ENCODE measurements at regions of chr7 and their contacts with region 1.

Region 1: DNA sequence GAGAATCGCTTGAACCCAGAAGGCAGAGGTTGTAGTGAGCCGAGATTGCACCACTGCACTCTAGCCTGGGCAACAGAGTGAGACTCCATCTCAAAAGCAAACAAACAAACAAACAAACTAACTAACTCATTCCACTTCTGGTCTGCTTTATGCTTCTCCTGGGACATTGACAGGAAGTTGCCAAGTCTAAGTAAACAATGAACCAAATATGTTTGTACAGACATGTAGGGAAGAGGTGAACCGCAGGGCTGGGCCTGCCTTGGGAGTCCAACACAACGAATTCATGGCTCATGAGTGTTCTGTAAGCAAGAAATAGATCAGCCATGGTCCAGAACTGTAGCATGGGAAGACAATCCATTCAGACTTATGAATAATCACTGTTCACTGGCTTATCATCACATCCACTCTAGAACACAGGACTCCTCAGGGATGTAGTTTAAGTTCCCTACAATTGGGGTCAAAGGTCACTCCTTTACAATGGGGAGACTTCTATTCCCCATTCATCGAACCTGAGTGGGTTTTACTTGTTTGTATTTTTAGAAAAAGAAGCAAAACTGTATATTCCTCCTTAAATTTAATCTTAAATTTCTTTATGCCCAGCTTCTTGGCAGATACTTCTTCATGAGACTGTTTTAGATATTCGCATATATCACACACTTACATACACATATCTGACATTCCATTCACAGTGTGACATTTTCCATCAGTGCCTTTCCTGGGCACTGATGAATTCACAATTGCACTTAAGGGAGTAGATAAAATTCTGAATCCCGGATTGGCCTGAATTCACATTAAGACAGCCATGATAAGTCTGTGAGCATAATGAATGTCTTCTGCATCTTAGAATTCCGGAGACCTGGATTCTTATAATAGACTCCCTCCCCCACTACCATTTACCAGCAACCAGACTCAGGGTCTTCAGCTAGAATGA is 159.1 kb upstream of the EEPD1 start:
- DNase-seq: peak; percentile 56
- H3K4me3 ChIP-seq: no peak overlapping the region
- H3K27ac ChIP-seq: no peak overlapping the region
- H3K4me1 ChIP-seq: peaks cover 5% of the 10 kb centered on the region
- H3K27me3 ChIP-seq: no peaks in the 10 kb centered on the region
- CTCF ChIP-seq: no peak

Region 2: GRCh38 chr7:36015733-36016132 is 21.8 kb after region 1 on chr7:
- CTCF ChIA-PET with region 1: no interaction called
- dilution Hi-C with region 1: no loop called
- in situ Hi-C with region 1: no loop called
- intact Hi-C with region 1: no loop called
- DNase-seq: peak; percentile 18
- H3K4me3 ChIP-seq: no peak overlapping the region
- H3K27ac ChIP-seq: no peak overlapping the region
- H3K4me1 ChIP-seq: no peaks in the 10 kb centered on the region
- H3K27me3 ChIP-seq: no peaks in the 10 kb centered on the region
- CTCF ChIP-seq: no peak

Region 3: DNA sequence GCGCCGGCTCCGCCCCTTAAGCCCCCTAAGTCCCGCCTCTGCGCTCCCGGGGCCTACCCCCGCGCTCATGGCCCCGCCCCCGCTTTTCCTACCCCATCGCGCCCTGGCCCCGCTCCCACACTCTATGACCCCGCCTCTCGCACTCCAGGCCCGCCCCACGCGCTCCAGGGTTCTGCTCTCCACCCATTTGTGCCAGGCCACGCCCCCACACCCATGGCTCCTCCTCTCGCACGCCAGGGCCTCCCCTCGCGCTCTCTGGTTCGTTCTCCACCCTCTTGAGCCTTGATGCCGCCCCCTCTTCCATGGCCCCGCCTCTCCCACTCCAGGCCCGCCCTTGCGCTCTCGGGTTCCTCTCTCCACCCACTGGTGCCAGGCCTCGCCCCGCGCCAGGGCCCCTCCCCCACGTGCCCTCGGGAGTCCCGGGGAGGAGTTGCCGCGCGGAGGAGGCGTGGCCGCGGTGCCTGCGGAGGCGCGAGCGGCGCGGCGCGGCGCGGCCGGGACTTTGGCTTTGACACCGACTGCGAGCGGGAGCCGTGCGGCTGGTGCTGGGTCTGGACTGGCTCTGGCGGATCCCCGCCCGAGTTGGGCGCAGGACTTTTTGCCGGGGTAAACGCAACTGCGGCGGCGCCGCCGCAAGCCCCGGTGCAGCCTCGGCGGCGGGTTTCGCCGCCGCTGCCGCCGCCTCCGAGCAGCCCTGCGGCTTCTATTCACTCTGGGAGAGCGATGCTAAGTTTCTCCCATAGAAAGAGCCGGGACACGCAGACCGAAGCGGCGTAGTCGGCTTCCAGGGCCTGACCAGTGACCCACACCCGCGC is 159.0 kb after region 1 on chr7 and contains the start of gene EEPD1:
- CTCF ChIA-PET with region 1: no interaction called
- dilution Hi-C with region 1: no loop called
- in situ Hi-C with region 1: no loop called
- intact Hi-C with region 1: loop called (anchors 10 kb)
- DNase-seq: peak; percentile 99
- H3K4me3 ChIP-seq: peak within 1 kb of the TSS; percentile 67 to 79 (median 74)
- H3K27ac ChIP-seq: peak within 1 kb of the TSS; percentile 24
- H3K4me1 ChIP-seq: peaks cover 18% of the 10 kb centered on the region
- H3K27me3 ChIP-seq: no peaks in the 10 kb centered on the region
- CTCF ChIP-seq: no peak
- total RNA-seq, gene EEPD1: 1.9 to 2.0 TPM

Region 4: GRCh38 chr7:36583318-36583717 is 589.4 kb after region 1 on chr7:
- CTCF ChIA-PET with region 1: no interaction called
- dilution Hi-C with region 1: no loop called
- in situ Hi-C with region 1: no loop called
- intact Hi-C with region 1: no loop called
- DNase-seq: peak; percentile 62
- H3K4me3 ChIP-seq: no peak overlapping the region
- H3K27ac ChIP-seq: no peak overlapping the region
- H3K4me1 ChIP-seq: peaks cover 10% of the 10 kb centered on the region
- H3K27me3 ChIP-seq: no peaks in the 10 kb centered on the region
- CTCF ChIP-seq: no peak